Activated CD4-positive, alpha-beta T cell treated with anti-CD3 and anti-CD28 coated beads for 36 hours (primary cell): ENCODE measurements at regions of chr4 and their contacts with region 1.

Region 1: GRCh38 chr4:87422104-87423052 is at the start of gene NUDT9:
- DNase-seq: peak; percentile 94
- ATAC-seq: peak; percentile 88
- H3K4me3 Mint-ChIP-seq: peak within 1 kb of the TSS; percentile 86
- H3K27ac Mint-ChIP-seq: peak within 1 kb of the TSS; percentile 99
- H3K4me1 Mint-ChIP-seq: peaks cover 33% of the 10 kb centered on the region
- H3K27me3 Mint-ChIP-seq: no peaks in the 10 kb centered on the region
- total RNA-seq, gene NUDT9: 9.8 to 13.3 TPM

Region 2: GRCh38 chr4:87220094-87220822 is 202.1 kb before region 1 on chr4 and contains the start of gene KLHL8:
- CTCF ChIA-PET with region 1: no interaction called
- POLR2A ChIA-PET with region 1: no interaction called
- intact Hi-C with region 1: loop called (anchors 1 to 5 kb)
- DNase-seq: peak; percentile 92
- ATAC-seq: peak; percentile 91
- H3K4me3 Mint-ChIP-seq: peak within 1 kb of the TSS; percentile 89
- H3K27ac Mint-ChIP-seq: peak within 1 kb of the TSS; percentile 92
- H3K4me1 Mint-ChIP-seq: peaks cover 17% of the 10 kb centered on the region
- H3K27me3 Mint-ChIP-seq: peaks cover 2% of the 10 kb centered on the region
- total RNA-seq, gene KLHL8: 9.8 to 10.3 TPM

Region 3: GRCh38 chr4:87235020-87235671 is 187.2 kb before region 1 on chr4:
- CTCF ChIA-PET with region 1: no interaction called
- POLR2A ChIA-PET with region 1: no interaction called
- intact Hi-C with region 1: loop called in 1 of 2 experiments (anchors 5 kb)
- DNase-seq: no peak
- ATAC-seq: no peak
- H3K4me3 Mint-ChIP-seq: peak overlapping the region; percentile 69
- H3K27ac Mint-ChIP-seq: no peak overlapping the region
- H3K4me1 Mint-ChIP-seq: peaks cover 1% of the 10 kb centered on the region
- H3K27me3 Mint-ChIP-seq: no peaks in the 10 kb centered on the region

Region 4: DNA sequence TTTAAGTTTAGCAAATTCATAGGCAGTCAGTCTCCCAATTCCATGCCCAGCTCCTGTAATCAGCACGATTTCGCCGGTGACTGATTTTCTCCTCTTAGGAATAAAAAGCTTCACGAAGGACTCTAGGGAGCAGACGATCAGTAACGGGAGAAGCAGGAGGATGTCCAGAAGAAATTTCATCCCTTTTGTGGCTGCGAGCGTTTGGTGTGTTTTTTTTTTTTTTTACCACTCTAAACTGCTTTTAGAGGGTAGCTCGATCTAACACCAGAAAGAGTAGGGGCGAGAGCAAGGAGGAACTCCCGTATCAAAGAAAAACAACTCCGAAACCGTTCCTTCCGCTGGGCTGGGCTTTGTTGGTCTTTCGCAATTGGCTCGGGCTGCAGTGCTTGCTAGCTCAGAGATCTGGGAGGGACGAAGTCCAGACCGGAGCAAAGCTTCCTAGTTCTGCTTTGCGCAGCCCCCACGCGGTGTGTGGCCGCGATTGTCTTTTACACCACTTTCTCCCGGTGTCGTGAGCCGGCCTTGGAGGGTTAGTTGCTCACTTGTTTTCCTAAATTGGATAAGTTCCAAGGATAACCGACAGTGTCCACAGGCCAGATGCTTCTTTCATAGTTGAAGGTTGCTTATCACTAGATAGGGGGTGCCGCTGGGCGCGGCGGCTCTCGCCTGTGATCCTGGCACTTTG is 31.3 kb before region 1 on chr4 and contains the start of gene HSD17B11:
- CTCF ChIA-PET with region 1: interaction called, 18 read pairs
- POLR2A ChIA-PET with region 1: interaction called, 4 read pairs
- intact Hi-C with region 1: loop called (anchors 1 kb)
- DNase-seq: peak; percentile 87
- ATAC-seq: peak; percentile 98
- H3K4me3 Mint-ChIP-seq: peak within 1 kb of the TSS; percentile 78
- H3K27ac Mint-ChIP-seq: peak within 1 kb of the TSS; percentile 92
- H3K4me1 Mint-ChIP-seq: peaks cover 47% of the 10 kb centered on the region
- H3K27me3 Mint-ChIP-seq: no peaks in the 10 kb centered on the region
- total RNA-seq, gene HSD17B11: 12.0 to 14.9 TPM

Region 5: DNA sequence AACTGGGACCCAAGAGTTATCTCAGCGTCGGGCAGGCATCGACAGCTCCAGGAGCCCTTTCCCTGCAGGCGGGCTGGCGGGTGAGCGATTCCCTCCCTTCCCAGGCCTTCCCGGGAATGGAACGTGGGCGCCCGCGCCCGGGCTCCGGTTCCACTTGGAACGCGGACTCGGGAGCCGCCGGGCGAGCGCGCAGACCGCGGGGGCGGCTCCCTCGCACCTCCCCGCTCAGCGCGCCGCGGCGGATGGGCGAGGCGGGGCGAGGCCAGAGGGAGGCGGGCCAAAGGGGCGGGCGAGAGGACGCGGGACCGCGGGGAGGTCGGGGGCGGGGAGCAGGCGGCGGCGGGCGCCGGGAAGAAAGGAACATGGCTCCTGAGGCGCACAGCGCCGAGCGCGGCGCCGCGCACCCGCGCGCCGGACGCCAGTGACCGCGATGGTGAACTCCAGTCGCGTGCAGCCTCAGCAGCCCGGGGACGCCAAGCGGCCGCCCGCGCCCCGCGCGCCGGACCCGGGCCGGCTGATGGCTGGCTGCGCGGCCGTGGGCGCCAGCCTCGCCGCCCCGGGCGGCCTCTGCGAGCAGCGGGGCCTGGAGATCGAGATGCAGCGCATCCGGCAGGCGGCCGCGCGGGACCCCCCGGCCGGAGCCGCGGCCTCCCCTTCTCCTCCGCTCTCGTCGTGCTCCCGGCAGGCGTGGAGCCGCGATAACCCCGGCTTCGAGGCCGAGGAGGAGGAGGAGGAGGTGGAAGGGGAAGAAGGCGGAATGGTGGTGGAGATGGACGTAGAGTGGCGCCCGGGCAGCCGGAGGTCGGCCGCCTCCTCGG is 585.1 kb after region 1 on chr4 and contains the start of gene PKD2:
- CTCF ChIA-PET with region 1: interaction called, 3 read pairs
- POLR2A ChIA-PET with region 1: no interaction called
- intact Hi-C with region 1: loop called in 1 of 2 experiments (anchors 5 kb)
- DNase-seq: peak; percentile 89
- ATAC-seq: peak; percentile 92
- H3K4me3 Mint-ChIP-seq: peak within 1 kb of the TSS; percentile 84
- H3K27ac Mint-ChIP-seq: peak within 1 kb of the TSS; percentile 72
- H3K4me1 Mint-ChIP-seq: peaks cover 32% of the 10 kb centered on the region
- H3K27me3 Mint-ChIP-seq: peaks cover 5% of the 10 kb centered on the region
- total RNA-seq, gene PKD2: 4.1 to 5.0 TPM

Region 6: DNA sequence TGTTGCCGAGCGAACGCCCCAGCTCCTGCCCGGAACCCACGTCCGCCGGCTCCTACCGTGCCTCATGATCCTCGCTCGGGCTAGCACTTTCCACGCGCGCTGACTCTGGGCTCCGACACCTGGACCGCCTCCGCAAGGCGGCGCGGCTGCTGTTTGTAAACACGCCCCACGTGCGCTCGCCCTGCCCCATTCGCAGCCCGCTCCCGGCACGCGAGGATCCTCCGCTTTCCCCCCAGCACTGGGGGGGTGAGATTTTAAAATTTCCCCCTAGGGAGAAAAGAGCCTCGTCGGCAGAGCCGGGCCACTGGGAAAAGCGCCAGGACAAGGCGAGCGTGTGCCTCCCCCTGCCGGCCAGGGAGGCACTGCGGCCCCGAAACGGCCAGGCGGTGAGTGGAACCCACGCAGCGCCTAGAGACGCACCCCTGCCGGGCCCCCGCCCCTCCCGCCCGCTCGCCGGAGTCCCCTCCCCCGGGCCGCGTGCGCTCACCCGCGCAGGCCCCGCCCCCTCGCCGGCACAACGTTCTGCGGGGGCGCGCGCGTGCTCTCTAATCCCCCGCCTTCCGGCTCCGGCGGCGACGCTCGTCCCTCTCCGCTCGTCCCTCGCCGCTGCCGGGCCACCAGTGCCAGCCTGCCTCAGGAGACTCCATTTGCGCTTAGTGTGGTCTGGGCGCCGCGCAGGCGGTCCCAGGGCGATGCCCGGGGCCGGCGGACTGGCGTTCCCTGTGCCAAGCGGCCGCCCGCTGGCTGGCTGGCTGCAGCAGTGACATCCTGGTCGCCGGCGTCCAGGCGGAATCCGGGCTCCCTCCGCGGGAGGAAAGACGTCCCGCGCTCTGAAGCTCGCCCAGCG is 1688.8 kb after region 1 on chr4 and contains the start of gene TIGD2:
- CTCF ChIA-PET with region 1: no interaction called
- POLR2A ChIA-PET with region 1: no interaction called
- intact Hi-C with region 1: loop called in 1 of 2 experiments (anchors 10 kb)
- DNase-seq: peak; percentile 93
- ATAC-seq: peak; percentile 95
- H3K4me3 Mint-ChIP-seq: peak within 1 kb of the TSS; percentile 73
- H3K27ac Mint-ChIP-seq: peak within 1 kb of the TSS; percentile 86
- H3K4me1 Mint-ChIP-seq: peaks cover 18% of the 10 kb centered on the region
- H3K27me3 Mint-ChIP-seq: peaks cover 16% of the 10 kb centered on the region
- total RNA-seq, gene TIGD2: 2.1 to 2.3 TPM